IMR-90 (cell line): ENCODE measurements at regions of chr13 and their contacts with region 1.

Region 1: GRCh38 chr13:32031025-32031814 is at the start of gene FRY:
- DNase-seq: peak; percentile 58
- ATAC-seq: peak; percentile 89
- H3K4me3 ChIP-seq: peak within 1 kb of the TSS; percentile 65
- H3K27ac ChIP-seq: peak within 1 kb of the TSS; percentile 56
- H3K4me1 ChIP-seq: peaks cover 8% of the 10 kb centered on the region
- H3K27me3 ChIP-seq: no peaks in the 10 kb centered on the region
- CTCF ChIP-seq: 0 out of 2 replicates have a peak, but pooled peaks have one; percentile 2
- POLR2A ChIP-seq: no peak
- RAD21 ChIP-seq: no peak; the same call in 1 of the 2 replicates
- total RNA-seq, gene FRY: 3.0 and 4.2 TPM in 2 replicates

Region 2: DNA sequence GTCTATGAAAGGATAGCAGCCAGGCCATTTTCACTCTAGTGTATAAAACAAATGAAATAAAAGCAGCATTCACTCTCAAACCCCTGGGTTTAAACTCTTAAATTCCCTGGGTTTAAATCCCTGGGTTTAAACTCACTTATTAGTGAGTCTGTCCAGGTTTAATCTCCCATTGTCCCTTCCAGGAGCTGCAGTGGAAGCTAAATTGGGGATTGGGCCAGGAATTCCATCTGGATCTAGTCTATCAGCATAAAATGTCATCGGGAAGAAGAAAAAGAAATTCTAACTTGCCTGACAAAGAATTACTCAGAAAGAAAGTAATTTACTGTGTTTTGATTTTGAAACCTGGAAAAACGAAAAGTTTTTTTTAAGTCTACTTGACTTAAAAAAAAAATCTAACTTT is 55.1 kb after region 1 on chr13:
- CTCF ChIA-PET with region 1: no interaction called
- POLR2A ChIA-PET with region 1: no interaction called
- dilution Hi-C with region 1: no loop called
- in situ Hi-C with region 1: no loop called
- intact Hi-C with region 1: loop called (anchors 10 kb)
- DNase-seq: peak; percentile 31
- ATAC-seq: no peak
- H3K4me3 ChIP-seq: no peak overlapping the region
- H3K27ac ChIP-seq: no peak overlapping the region
- H3K4me1 ChIP-seq: peaks cover 9% of the 10 kb centered on the region
- H3K27me3 ChIP-seq: no peaks in the 10 kb centered on the region
- CTCF ChIP-seq: no peak
- POLR2A ChIP-seq: no peak
- RAD21 ChIP-seq: no peak

Region 3: DNA sequence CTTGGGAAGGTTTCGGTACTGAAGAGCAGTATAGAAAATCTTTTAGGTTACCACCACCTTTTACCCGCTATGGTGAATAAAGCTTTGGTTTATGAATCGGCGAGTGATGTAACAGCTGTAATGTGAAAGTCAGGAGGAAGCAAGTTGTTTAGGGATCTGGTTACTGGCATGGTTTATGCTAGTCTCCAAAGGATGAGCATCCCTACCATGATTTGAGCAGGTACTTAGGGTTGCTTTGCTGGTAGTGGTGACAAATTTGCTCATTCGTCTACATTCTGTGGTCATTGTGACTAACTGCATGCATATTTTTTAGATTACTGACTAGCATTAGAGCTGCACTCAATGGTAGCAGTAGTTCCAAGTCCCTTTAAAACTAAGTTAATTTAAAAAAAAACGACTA is 104.4 kb after region 1 on chr13:
- CTCF ChIA-PET with region 1: no interaction called
- POLR2A ChIA-PET with region 1: no interaction called
- dilution Hi-C with region 1: no loop called
- in situ Hi-C with region 1: no loop called
- intact Hi-C with region 1: loop called (anchors 5 kb)
- DNase-seq: peak; percentile 89
- ATAC-seq: peak; percentile 89
- H3K4me3 ChIP-seq: no peak overlapping the region
- H3K27ac ChIP-seq: no peak overlapping the region
- H3K4me1 ChIP-seq: peaks cover 12% of the 10 kb centered on the region
- H3K27me3 ChIP-seq: no peaks in the 10 kb centered on the region
- CTCF ChIP-seq: no peak
- POLR2A ChIP-seq: no peak
- RAD21 ChIP-seq: no peak

Region 4: DNA sequence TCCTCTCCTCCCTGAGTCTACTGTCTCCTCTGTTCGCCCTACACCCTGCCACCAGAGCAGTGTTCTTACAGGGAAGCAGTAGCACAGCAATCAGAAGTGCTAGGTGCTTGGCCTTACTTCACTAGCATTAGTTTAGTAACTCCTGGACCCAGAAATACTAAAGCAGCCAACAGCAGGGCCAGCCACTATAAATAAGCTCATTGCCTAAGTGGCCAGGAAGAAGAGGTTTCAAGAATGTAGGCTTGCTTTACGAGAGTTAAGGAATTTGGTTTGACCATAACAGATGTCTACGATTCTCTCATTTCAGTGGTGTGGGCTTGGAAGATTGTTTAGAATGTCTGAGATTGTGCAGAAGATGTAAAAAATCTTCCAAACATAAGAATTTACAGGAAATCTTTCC is 180.6 kb after region 1 on chr13:
- CTCF ChIA-PET with region 1: no interaction called
- POLR2A ChIA-PET with region 1: interaction called, 14 read pairs
- dilution Hi-C with region 1: no loop called
- in situ Hi-C with region 1: no loop called
- intact Hi-C with region 1: loop called (anchors 5 kb)
- DNase-seq: peak; percentile 95
- ATAC-seq: peak; percentile 84
- H3K4me3 ChIP-seq: no peak overlapping the region
- H3K27ac ChIP-seq: peak overlapping the region; percentile 82
- H3K4me1 ChIP-seq: peaks cover 25% of the 10 kb centered on the region
- H3K27me3 ChIP-seq: no peaks in the 10 kb centered on the region
- CTCF ChIP-seq: no peak
- POLR2A ChIP-seq: no peak
- RAD21 ChIP-seq: no peak

Region 5: GRCh38 chr13:32228330-32229041 is 197.3 kb after region 1 on chr13:
- CTCF ChIA-PET with region 1: interaction called, 4 read pairs
- POLR2A ChIA-PET with region 1: interaction called, 3 read pairs
- dilution Hi-C with region 1: no loop called
- in situ Hi-C with region 1: no loop called
- intact Hi-C with region 1: loop called (anchors 5 kb)
- DNase-seq: peak; percentile 84
- ATAC-seq: peak; percentile 12; the same call in 1 of the 2 replicates
- H3K4me3 ChIP-seq: no peak overlapping the region
- H3K27ac ChIP-seq: no peak overlapping the region
- H3K4me1 ChIP-seq: peaks cover 21% of the 10 kb centered on the region
- H3K27me3 ChIP-seq: no peaks in the 10 kb centered on the region
- CTCF ChIP-seq: 0 out of 2 replicates have a peak, but pooled peaks have one; percentile 6
- POLR2A ChIP-seq: no peak
- RAD21 ChIP-seq: peak; percentile 11; the same call in 1 of the 2 replicates